H1 (cell line): ENCODE measurements at regions of chr22 and their contacts with region 1.

Region 1: GRCh38 chr22:36180038-36180880 is 19.7 kb upstream of the APOL3 start:
- DNase-seq: peak; percentile 50 to 94
- H3K4me3 ChIP-seq: no peak overlapping the region
- H3K27ac ChIP-seq: no peak overlapping the region
- H3K4me1 ChIP-seq: no peaks in the 10 kb centered on the region
- H3K27me3 ChIP-seq: peaks cover 0 to 1% (median 0%) of the 10 kb centered on the region in 4 experiments; a peak in 2 of 7 replicates
- CTCF ChIP-seq: peak; percentile 82 to 93 (median 86)
- EP300 ChIP-seq: no peak
- POLR2A ChIP-seq: no peak
- RAD21 ChIP-seq: peak; percentile 75 to 83

Region 2: DNA sequence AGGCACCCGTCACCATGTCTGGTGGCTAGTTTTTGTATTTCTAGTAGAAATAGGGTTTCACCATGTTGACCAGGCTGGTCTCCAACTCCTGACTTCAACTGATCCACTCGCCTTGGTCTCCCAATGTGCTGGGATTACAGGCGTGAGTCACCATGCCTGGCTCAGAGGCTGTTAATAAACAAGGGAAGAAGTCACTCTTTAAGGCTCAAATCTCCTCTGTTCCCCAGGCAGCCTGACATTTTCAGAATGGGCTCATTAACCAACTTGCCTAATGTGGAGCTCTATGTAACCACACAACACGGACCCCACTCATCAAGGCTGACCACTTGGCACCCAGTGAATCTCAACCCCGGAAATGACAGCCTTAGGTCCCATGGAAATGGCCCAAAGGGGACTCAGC is 43.8 kb before region 1 on chr22:
- CTCF ChIA-PET with region 1: interaction called, 86 read pairs
- POLR2A ChIA-PET with region 1: no interaction called
- DNase-seq: no peak
- H3K4me3 ChIP-seq: no peak overlapping the region
- H3K27ac ChIP-seq: no peak overlapping the region
- H3K4me1 ChIP-seq: peaks cover 0 to 6% (median 4%) of the 10 kb centered on the region in 4 experiments; a peak in 5 of 7 replicates
- H3K27me3 ChIP-seq: no peaks in the 10 kb centered on the region; a peak in 1 of 7 replicates
- CTCF ChIP-seq: no peak
- EP300 ChIP-seq: no peak
- POLR2A ChIP-seq: no peak
- RAD21 ChIP-seq: no peak

Region 3: GRCh38 chr22:36144886-36145541 is 35.2 kb before region 1 on chr22:
- CTCF ChIA-PET with region 1: interaction called, 86 read pairs
- POLR2A ChIA-PET with region 1: no interaction called
- DNase-seq: peak; percentile 53 to 73
- H3K4me3 ChIP-seq: peak overlapping the region in 2 of 4 experiments; percentile 7 to 33; a peak in 3 of 8 replicates
- H3K27ac ChIP-seq: no peak overlapping the region
- H3K4me1 ChIP-seq: peaks cover 5 to 11% (median 9%) of the 10 kb centered on the region in 4 experiments
- H3K27me3 ChIP-seq: no peaks in the 10 kb centered on the region; a peak in 1 of 7 replicates
- CTCF ChIP-seq: peak; percentile 44 to 85 (median 71)
- EP300 ChIP-seq: no peak
- POLR2A ChIP-seq: no peak
- RAD21 ChIP-seq: peak; percentile 76 to 79

Region 4: DNA sequence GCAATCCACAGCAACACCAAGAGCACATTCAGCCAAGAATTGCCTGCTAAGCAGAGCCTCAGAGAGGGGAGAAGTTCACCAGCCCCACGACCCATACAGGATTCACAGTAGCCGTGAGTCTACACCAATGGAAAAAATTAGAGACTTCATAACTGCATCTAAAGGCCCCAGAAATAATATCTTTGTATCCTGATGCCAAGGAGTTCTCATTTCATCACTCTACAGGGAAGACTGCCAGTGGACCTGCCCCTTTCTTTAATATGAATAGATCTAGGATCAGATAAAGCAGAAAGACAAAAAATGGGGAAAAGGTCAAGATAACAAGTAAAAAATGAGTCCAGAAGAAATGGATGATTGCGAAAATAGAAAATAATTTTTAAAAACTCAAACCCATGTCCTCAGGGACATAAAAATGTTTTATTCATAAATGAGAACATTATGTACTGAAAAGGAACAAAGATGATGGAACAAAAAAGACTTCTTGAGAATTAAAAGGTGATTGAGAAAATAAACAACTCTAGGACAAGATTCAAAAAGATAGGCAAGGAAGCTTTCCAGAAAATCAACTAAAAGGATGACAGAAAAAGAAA is 29.2 kb before region 1 on chr22:
- CTCF ChIA-PET with region 1: interaction called, 86 read pairs
- POLR2A ChIA-PET with region 1: no interaction called
- DNase-seq: no peak
- H3K4me3 ChIP-seq: no peak overlapping the region
- H3K27ac ChIP-seq: no peak overlapping the region
- H3K4me1 ChIP-seq: peaks cover 0 to under 1% (median 0%) of the 10 kb centered on the region in 4 experiments; a peak in 1 of 7 replicates
- H3K27me3 ChIP-seq: no peaks in the 10 kb centered on the region
- CTCF ChIP-seq: no peak
- EP300 ChIP-seq: no peak
- POLR2A ChIP-seq: no peak
- RAD21 ChIP-seq: no peak

Region 5: DNA sequence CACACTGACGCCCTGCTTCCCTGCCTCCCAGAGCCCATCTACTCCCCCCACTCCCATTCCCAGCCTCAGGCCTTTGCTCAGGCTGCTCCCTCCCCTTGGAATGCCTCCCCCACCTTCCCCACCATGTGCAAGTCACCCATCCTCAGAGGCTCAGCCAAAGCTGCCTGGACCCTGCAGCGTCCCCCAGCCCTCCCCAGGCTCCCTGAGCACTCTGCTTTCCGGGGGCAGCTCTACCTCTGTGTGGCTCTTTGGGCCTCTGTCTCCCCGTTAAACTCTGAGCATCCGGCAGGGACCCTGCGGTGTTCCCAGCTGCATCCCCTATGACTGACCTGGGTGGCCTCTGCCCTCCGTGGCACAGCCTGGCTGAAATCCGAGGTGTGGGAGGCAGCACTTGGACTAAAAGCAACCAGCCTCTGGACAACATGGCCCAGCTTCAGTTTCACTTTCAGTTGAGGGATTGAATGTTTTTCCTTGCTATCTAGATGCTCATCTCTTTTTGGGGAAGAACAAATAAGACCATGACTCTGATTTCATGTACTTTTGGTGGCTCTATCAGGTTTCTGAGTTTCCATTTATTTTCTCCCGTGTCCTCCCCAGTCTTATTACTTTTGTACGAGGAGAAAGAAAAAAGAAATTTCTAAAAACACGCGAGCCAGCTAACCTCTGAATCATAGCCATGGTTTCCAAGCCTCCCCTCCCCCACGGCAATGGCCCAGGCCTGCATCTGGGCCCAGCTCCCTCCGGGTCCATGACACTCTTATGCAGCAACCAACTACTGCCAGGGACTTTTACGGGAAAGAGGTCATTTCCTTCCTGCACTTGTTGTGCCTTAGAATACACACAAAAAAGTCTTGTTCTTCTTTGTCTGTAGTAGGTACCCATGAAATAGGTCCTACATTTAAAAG is 23.5 kb before region 1 on chr22:
- CTCF ChIA-PET with region 1: interaction called, 30 read pairs
- POLR2A ChIA-PET with region 1: no interaction called
- DNase-seq: no peak
- H3K4me3 ChIP-seq: no peak overlapping the region; a peak in 1 of 8 replicates
- H3K27ac ChIP-seq: no peak overlapping the region
- H3K4me1 ChIP-seq: peaks cover 0 to 10% (median 8%) of the 10 kb centered on the region in 4 experiments; a peak in 6 of 7 replicates
- H3K27me3 ChIP-seq: no peaks in the 10 kb centered on the region
- CTCF ChIP-seq: no peak
- EP300 ChIP-seq: no peak
- POLR2A ChIP-seq: no peak
- RAD21 ChIP-seq: no peak

Region 6: GRCh38 chr22:36162127-36163034 is 17.9 kb before region 1 on chr22:
- CTCF ChIA-PET with region 1: interaction called, 30 read pairs
- POLR2A ChIA-PET with region 1: no interaction called
- DNase-seq: no peak
- H3K4me3 ChIP-seq: no peak overlapping the region
- H3K27ac ChIP-seq: no peak overlapping the region
- H3K4me1 ChIP-seq: no peaks in the 10 kb centered on the region
- H3K27me3 ChIP-seq: no peaks in the 10 kb centered on the region
- CTCF ChIP-seq: no peak
- EP300 ChIP-seq: no peak
- POLR2A ChIP-seq: no peak
- RAD21 ChIP-seq: no peak

Region 7: DNA sequence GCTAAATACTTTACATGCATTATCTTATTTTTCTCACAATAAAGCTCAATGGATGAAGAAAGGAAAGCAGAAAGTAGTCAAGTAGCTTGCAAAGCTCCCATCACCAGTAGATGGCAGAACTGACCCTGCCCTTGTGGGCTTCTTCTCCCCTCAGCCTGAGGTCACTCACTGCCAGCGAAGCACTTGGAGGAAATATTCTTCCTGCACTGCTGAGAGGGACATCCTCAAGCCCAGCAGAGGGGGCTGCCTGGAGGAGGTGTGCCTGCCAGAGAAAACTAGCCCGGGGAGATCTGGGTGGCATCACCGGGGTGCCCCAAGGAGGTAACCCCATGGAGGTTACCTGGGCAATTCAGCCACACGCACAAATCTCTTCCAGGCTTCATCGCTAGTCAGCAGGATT is 14.7 kb after region 1 on chr22:
- CTCF ChIA-PET with region 1: interaction called, 14 read pairs
- POLR2A ChIA-PET with region 1: no interaction called
- DNase-seq: peak; percentile 36 to 66
- H3K4me3 ChIP-seq: no peak overlapping the region
- H3K27ac ChIP-seq: no peak overlapping the region
- H3K4me1 ChIP-seq: peaks cover 0 to 11% (median 9%) of the 10 kb centered on the region in 4 experiments; a peak in 6 of 7 replicates
- H3K27me3 ChIP-seq: no peaks in the 10 kb centered on the region
- CTCF ChIP-seq: peak; percentile 36 to 82 (median 81)
- EP300 ChIP-seq: no peak
- POLR2A ChIP-seq: no peak
- RAD21 ChIP-seq: peak; percentile 78 to 83

Region 8: GRCh38 chr22:36425977-36426523 is 245.8 kb after region 1 on chr22:
- CTCF ChIA-PET with region 1: no interaction called
- POLR2A ChIA-PET with region 1: no interaction called
- DNase-seq: peak in 1 of 2 experiments; percentile 50
- H3K4me3 ChIP-seq: no peak overlapping the region
- H3K27ac ChIP-seq: no peak overlapping the region
- H3K4me1 ChIP-seq: peaks cover 0 to 4% (median 2%) of the 10 kb centered on the region in 4 experiments; a peak in 4 of 7 replicates
- H3K27me3 ChIP-seq: no peaks in the 10 kb centered on the region
- CTCF ChIP-seq: no peak
- EP300 ChIP-seq: no peak
- POLR2A ChIP-seq: no peak
- RAD21 ChIP-seq: no peak